ENCODE measurements at regions of chr15 and their contacts with region 1.

Region 1: DNA sequence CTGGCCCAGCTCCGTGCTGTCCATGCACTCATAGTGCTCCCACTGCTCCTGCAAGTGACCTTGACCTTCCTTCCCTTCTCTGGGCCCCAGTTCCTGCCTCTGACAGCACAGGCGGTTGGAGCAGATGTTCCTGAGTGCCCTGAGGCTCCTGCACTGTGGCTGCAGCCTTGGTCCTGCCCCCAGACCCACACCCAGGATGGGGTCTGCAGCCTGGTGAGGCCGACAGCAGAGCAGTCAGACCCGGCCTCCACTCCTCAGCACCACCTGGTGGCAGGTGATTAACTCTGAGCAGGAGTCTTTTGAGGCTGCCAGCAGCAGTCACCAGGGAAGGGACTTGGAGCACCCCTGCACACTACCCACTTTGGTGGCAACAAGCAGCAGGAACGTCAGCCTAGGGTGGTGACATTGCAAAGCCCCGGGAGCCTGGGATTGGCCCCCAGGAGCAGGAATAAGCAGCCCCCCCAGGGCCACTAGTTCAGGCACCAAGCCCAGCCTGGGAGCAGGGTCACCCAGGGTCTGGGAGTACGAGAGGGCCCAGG is 64.6 kb downstream of the CYP11A1 start:
- DNase-seq: peak; percentile 83
- H3K4me3 Mint-ChIP-seq: no peak overlapping the region
- H3K27ac Mint-ChIP-seq: no peak overlapping the region
- H3K4me1 Mint-ChIP-seq: peaks cover 8% of the 10 kb centered on the region
- H3K27me3 Mint-ChIP-seq: peaks cover 100% of the 10 kb centered on the region
- CTCF ChIP-seq: peak; percentile 86

Region 2: DNA sequence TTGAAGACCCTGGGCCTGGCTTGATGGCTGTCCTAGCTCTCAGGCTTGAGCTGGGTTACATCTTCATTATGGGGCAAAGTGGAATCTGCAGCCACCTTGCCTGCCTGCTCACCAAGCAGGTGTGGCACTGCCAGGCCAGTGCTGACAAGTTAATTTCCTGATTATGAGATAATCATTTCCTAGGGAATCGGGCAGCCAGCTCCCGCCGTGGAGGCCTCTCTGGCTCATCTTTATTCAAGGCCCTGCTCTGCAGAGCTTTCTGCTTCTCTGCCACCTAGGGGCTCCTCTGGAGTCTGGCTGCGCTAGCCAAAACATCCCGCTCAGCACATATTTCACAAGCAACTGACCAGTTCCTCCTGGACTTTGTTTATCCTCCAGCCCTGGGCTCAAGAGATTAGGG is 366.7 kb before region 1 on chr15:
- CTCF ChIA-PET with region 1: no interaction called
- intact Hi-C with region 1: no loop called
- DNase-seq: no peak
- H3K4me3 Mint-ChIP-seq: no peak overlapping the region
- H3K27ac Mint-ChIP-seq: no peak overlapping the region
- H3K4me1 Mint-ChIP-seq: peaks cover 6% of the 10 kb centered on the region
- H3K27me3 Mint-ChIP-seq: peaks cover 11% of the 10 kb centered on the region
- CTCF ChIP-seq: no peak

Region 3: DNA sequence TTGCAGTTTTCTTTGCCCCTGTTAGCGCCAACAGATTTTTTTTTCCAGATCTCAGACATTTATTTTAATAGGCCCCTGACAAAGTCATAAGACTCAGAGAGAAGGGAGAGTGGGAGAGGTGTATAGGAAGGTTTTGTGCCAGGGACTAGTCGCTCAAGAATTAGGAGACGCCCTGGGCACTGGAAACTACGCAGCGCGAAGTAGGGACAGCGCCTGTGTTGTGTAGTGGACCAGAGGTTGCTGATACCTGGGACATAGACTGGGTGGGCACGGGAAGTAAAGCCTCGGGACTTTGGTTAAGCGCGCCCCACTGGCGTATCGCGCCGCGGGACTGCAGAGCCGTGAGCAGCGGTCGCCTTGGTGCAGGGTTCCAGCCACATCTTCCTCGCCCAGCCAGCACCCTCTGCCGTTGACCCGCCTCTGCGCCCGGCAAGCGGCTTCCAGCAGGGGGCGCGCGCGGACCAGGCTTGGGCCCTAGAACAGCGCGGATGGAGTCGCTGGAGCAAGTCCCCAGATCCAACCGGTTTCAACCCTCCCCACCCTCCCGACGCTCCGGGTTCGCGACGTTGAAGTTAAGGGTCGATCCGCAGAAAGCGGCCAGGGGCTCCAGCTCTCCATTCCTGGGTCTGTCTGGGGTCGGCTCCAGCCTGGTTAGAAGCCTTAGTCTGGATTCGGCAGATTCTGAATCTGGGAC is 175.5 kb before region 1 on chr15:
- CTCF ChIA-PET with region 1: interaction called, 29 read pairs
- intact Hi-C with region 1: loop called (anchors 1 kb)
- DNase-seq: peak; percentile 97
- H3K4me3 Mint-ChIP-seq: no peak overlapping the region
- H3K27ac Mint-ChIP-seq: no peak overlapping the region
- H3K4me1 Mint-ChIP-seq: no peaks in the 10 kb centered on the region
- H3K27me3 Mint-ChIP-seq: peaks cover 91% of the 10 kb centered on the region
- CTCF ChIP-seq: peak; percentile 98

Region 4: GRCh38 chr15:74340139-74340538 is 37.2 kb after region 1 on chr15:
- CTCF ChIA-PET with region 1: no interaction called
- intact Hi-C with region 1: no loop called
- DNase-seq: peak; percentile 44
- H3K4me3 Mint-ChIP-seq: no peak overlapping the region
- H3K27ac Mint-ChIP-seq: no peak overlapping the region
- H3K4me1 Mint-ChIP-seq: peaks cover 20% of the 10 kb centered on the region
- H3K27me3 Mint-ChIP-seq: peaks cover 10% of the 10 kb centered on the region
- CTCF ChIP-seq: no peak

Region 5: GRCh38 chr15:74373731-74374647 is 71.1 kb after region 1 on chr15:
- CTCF ChIA-PET with region 1: no interaction called
- intact Hi-C with region 1: no loop called
- DNase-seq: peak; percentile 98
- H3K4me3 Mint-ChIP-seq: peak overlapping the region; percentile 81
- H3K27ac Mint-ChIP-seq: no peak overlapping the region
- H3K4me1 Mint-ChIP-seq: peaks cover 20% of the 10 kb centered on the region
- H3K27me3 Mint-ChIP-seq: peaks cover 46% of the 10 kb centered on the region
- CTCF ChIP-seq: peak; percentile 88

Region 6: GRCh38 chr15:74808073-74808755 is 505.3 kb after region 1 on chr15:
- CTCF ChIA-PET with region 1: no interaction called
- intact Hi-C with region 1: no loop called
- DNase-seq: no peak
- H3K4me3 Mint-ChIP-seq: no peak overlapping the region
- H3K27ac Mint-ChIP-seq: no peak overlapping the region
- H3K4me1 Mint-ChIP-seq: no peaks in the 10 kb centered on the region
- H3K27me3 Mint-ChIP-seq: peaks cover 29% of the 10 kb centered on the region
- CTCF ChIP-seq: no peak

Measured in Calu3 (cell line).